ENCODE measurements at regions of chrX and their contacts with region 1.

Region 1: GRCh38 chrX:153649178-153649914 is 2.3 kb downstream of the DUSP9 start:
- DNase-seq: no peak
- H3K4me3 ChIP-seq: no peak overlapping the region
- H3K27ac ChIP-seq: no peak overlapping the region
- H3K4me1 ChIP-seq: peaks cover 11% of the 10 kb centered on the region
- H3K27me3 ChIP-seq: peaks cover 5% of the 10 kb centered on the region
- CTCF ChIP-seq: peak in 1 of 2 donors; percentile 47

Region 2: GRCh38 chrX:153443481-153444332 is 205.6 kb before region 1 on chrX:
- CTCF ChIA-PET with region 1: no interaction called
- dilution Hi-C with region 1: no loop called
- in situ Hi-C with region 1: no loop called
- intact Hi-C with region 1: no loop called
- DNase-seq: peak; percentile 13
- H3K4me3 ChIP-seq: no peak overlapping the region
- H3K27ac ChIP-seq: no peak overlapping the region
- H3K4me1 ChIP-seq: peaks cover 22% of the 10 kb centered on the region
- H3K27me3 ChIP-seq: no peaks in the 10 kb centered on the region
- CTCF ChIP-seq: no peak

Region 3: DNA sequence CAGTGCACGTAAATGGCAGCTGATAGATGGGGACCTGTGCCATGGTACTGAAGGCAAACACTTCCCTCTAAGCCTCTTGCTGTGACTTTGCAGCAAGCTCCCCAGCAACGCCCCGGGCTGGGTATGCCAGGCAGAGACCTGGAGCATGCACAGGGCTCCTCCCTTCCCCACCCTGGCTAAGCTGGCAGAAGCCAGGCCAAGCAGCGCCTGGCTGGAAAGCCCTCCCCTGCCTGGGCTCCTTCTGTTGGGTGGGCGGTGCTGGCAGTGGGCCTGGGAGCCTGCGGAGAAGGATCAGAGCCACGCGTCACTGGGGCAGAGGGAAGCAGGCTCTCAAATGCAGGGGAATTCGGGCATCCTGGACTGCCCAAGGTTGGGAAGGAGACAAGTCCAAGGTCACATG is 128.3 kb before region 1 on chrX:
- CTCF ChIA-PET with region 1: no interaction called
- dilution Hi-C with region 1: no loop called
- in situ Hi-C with region 1: no loop called
- intact Hi-C with region 1: no loop called
- DNase-seq: peak; percentile 4
- H3K4me3 ChIP-seq: no peak overlapping the region
- H3K27ac ChIP-seq: no peak overlapping the region
- H3K4me1 ChIP-seq: no peaks in the 10 kb centered on the region
- H3K27me3 ChIP-seq: peaks cover 6% of the 10 kb centered on the region
- CTCF ChIP-seq: no peak

Region 4: DNA sequence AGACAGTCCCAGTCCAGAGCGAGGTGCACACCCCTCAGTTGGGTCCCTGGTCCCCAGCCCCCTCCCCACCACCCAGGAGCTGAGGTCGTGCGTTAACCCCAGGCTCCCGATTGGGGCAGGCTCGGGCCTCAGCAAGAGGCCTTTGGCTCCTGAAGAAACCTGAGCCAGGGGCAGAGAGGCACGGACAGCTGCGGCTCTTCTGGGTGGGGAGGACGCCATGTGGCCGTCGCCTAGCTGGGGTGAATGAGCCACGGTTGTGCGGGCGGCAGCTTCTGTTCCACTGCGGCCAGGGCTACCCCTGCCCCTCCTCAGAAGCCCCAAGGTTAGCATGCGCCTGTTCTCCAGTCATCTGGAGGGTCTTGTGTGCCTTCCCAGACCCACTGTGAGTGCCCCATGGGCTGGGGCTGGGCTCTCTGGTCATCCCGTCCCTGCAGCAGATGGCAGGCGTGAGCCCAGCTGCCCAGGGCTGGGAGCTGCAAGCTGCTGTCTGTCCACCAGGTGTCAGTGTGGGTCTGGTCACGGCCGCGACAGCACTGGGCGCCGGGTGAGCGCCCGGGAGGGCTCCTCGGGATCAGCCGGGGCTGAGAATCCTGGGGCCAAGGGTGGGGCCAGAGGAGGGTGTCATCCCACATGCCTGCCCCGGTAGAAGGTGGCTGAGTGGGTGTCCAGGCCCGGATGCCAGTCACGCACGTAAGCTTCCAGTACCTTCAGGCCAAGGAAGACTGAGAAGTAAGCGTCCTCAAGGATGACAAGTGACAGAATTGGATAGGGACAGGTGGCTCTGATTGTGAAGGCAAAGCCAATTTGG is 110.0 kb before region 1 on chrX:
- CTCF ChIA-PET with region 1: no interaction called
- dilution Hi-C with region 1: no loop called
- in situ Hi-C with region 1: no loop called
- intact Hi-C with region 1: loop called (anchors 1 kb)
- DNase-seq: peak; percentile 30
- H3K4me3 ChIP-seq: no peak overlapping the region
- H3K27ac ChIP-seq: no peak overlapping the region
- H3K4me1 ChIP-seq: no peaks in the 10 kb centered on the region
- H3K27me3 ChIP-seq: no peaks in the 10 kb centered on the region
- CTCF ChIP-seq: peak; percentile 56 to 89

Region 5: DNA sequence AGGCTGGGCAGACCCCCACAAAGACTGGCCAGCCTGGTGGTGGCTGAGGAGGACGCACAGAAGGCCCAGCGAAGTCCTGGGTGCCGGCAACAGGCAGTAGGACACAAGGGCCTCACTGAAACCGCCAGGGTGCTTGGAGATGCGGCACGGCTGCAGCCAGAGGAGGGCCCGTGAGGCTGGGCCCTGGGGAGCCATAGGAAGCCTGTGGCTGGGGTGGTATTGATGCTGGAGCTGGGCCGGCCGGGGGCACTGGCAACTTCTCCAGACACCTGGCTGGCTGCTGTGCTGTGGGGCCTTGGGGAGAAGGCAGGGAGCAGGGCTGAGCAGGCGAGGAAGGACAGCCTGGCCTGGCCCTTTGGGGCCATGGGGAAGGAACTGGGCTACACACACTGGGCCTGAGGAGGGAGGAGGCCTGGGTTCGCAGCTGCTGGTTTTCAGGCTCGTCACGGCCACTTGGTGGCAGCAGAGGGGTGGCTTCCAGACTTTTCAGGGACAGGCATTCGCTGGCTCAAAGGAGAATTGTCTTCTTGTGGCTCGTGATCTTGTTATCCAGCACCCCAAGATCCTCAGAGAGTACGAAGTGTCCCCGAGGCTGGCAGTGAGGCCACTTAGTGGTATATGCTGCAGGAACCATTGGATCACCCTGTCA is 94.7 kb before region 1 on chrX:
- CTCF ChIA-PET with region 1: no interaction called
- dilution Hi-C with region 1: no loop called
- in situ Hi-C with region 1: no loop called
- intact Hi-C with region 1: loop called (anchors 1 kb)
- DNase-seq: peak; percentile 27
- H3K4me3 ChIP-seq: no peak overlapping the region
- H3K27ac ChIP-seq: no peak overlapping the region
- H3K4me1 ChIP-seq: no peaks in the 10 kb centered on the region
- H3K27me3 ChIP-seq: peaks cover 3% of the 10 kb centered on the region
- CTCF ChIP-seq: peak; percentile 48 to 72

Region 6: DNA sequence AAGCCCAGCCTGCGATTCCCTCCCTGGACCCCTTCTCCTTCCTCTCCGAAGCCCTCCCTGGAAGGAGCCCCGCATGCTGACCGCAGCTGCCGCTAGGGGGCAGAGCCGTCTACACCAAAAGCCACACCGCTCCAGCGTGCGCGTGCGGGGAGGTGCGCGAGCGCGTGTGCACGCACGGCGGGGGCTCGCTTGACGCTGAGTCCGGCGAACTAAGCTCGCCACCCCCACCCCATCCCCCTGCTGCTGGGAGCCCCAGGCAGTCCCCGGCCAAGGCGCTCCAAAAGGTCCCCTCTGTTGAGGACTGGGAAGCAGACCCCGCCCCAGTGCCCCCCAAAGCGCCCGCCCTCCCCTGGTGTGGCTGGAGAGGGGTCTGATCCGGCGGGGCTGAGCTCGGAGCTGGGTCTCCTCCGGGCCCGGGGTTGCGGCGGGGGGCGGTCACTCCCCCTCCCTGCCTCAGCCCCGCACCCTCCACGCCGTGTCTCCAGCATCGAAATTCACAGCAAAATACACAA is 39.4 kb before region 1 on chrX:
- CTCF ChIA-PET with region 1: interaction called, 5 read pairs
- dilution Hi-C with region 1: no loop called
- in situ Hi-C with region 1: no loop called
- intact Hi-C with region 1: loop called (anchors 1 kb)
- DNase-seq: peak; percentile 21
- H3K4me3 ChIP-seq: peak overlapping the region in 1 of 3 experiments; percentile 27
- H3K27ac ChIP-seq: no peak overlapping the region
- H3K4me1 ChIP-seq: peaks cover 4% of the 10 kb centered on the region
- H3K27me3 ChIP-seq: no peaks in the 10 kb centered on the region
- CTCF ChIP-seq: peak; percentile 48 to 75

Region 7: DNA sequence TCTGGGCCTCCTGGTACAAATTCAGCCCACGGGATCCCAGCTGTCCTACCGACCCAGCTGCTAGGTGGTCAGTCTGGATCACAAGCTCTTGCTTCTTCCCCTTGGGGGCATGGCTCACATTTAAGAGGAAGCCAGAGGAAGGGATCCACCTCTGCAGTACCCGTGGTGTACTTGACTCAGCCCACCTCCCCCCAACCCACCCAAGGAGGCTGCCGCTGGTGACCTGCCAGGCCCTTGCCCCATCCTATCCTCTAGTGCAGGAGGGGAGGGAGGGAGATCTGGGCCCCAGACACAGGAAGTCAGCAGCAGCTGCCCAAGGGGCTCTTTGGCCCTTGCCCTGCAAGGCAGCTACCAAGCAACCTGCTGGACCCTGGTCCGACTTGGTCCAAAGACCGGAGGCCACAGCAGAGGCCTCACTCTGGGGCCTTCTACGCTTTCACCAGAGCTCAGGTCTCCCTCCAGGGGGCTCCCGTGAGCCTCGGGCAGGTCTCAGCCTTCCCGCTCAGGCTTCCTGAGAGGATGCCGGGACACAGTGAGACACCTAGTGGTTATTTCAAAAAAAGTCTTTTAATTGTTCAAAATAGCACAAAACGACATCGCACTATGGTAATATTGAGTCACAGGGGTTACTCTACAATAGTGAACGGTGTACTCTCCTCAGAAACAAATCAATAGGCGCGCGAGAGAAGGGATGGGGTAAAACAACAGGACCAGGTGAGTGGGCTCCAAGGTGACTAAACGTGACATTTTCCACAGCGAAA is 297.8 kb after region 1 on chrX:
- CTCF ChIA-PET with region 1: no interaction called
- dilution Hi-C with region 1: no loop called
- in situ Hi-C with region 1: no loop called
- intact Hi-C with region 1: no loop called
- DNase-seq: peak; percentile 61
- H3K4me3 ChIP-seq: no peak overlapping the region
- H3K27ac ChIP-seq: no peak overlapping the region
- H3K4me1 ChIP-seq: no peaks in the 10 kb centered on the region
- H3K27me3 ChIP-seq: no peaks in the 10 kb centered on the region
- CTCF ChIP-seq: peak; percentile 71 to 85

Measured in mammary epithelial cell (primary cell).